ENCODE measurements at regions of chr17 and their contacts with region 1.

Region 1: GRCh38 chr17:43316522-43317142 is 82.2 kb upstream of the ARL4D start:
- DNase-seq: peak; percentile 39
- ATAC-seq: no peak
- H3K4me3 Mint-ChIP-seq: no peak overlapping the region
- H3K27ac Mint-ChIP-seq: no peak overlapping the region
- H3K4me1 Mint-ChIP-seq: peaks cover 19% of the 10 kb centered on the region
- H3K27me3 Mint-ChIP-seq: no peaks in the 10 kb centered on the region
- CTCF ChIP-seq: no peak

Region 2: GRCh38 chr17:42997984-42998938 is 318.4 kb before region 1 on chr17 and contains the start of gene RPL27:
- CTCF ChIA-PET with region 1: no interaction called
- POLR2A ChIA-PET with region 1: interaction called, 28 read pairs
- intact Hi-C with region 1: no loop called
- DNase-seq: peak; percentile 99
- ATAC-seq: peak; percentile 97
- H3K4me3 Mint-ChIP-seq: peak within 1 kb of the TSS; percentile 96
- H3K27ac Mint-ChIP-seq: peak within 1 kb of the TSS; percentile 99
- H3K4me1 Mint-ChIP-seq: peaks cover 25% of the 10 kb centered on the region
- H3K27me3 Mint-ChIP-seq: no peaks in the 10 kb centered on the region
- CTCF ChIP-seq: peak; percentile 85
- total RNA-seq, gene RPL27: 1,640 to 1,647 TPM

Region 3: DNA sequence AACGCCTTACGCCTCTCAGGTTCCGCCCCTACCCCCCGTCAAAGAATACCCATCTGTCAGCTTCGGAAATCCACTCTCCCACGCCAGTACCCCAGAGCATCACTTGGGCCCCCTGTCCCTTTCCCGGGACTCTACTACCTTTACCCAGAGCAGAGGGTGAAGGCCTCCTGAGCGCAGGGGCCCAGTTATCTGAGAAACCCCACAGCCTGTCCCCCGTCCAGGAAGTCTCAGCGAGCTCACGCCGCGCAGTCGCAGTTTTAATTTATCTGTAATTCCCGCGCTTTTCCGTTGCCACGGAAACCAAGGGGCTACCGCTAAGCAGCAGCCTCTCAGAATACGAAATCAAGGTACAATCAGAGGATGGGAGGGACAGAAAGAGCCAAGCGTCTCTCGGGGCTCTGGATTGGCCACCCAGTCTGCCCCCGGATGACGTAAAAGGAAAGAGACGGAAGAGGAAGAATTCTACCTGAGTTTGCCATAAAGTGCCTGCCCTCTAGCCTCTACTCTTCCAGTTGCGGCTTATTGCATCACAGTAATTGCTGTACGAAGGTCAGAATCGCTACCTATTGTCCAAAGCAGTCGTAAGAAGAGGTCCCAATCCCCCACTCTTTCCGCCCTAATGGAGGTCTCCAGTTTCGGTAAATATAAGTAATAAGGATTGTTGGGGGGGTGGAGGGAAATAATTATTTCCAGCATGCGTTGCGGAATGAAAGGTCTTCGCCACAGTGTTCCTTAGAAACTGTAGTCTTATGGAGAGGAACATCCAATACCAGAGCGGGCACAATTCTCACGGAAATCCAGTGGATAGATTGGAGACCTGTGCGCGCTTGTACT is 191.3 kb before region 1 on chr17 and contains the start of gene BRCA1:
- CTCF ChIA-PET with region 1: no interaction called
- POLR2A ChIA-PET with region 1: interaction called, 35 read pairs
- intact Hi-C with region 1: no loop called
- DNase-seq: peak; percentile 99
- ATAC-seq: peak; percentile 99
- H3K4me3 Mint-ChIP-seq: peak within 1 kb of the TSS; percentile 87
- H3K27ac Mint-ChIP-seq: peak within 1 kb of the TSS; percentile 98
- H3K4me1 Mint-ChIP-seq: peaks cover 16% of the 10 kb centered on the region
- H3K27me3 Mint-ChIP-seq: no peaks in the 10 kb centered on the region
- CTCF ChIP-seq: no peak
- total RNA-seq, gene BRCA1: 84.5 to 92.9 TPM

Region 4: GRCh38 chr17:43193251-43193650 is 123.4 kb before region 1 on chr17:
- CTCF ChIA-PET with region 1: no interaction called
- POLR2A ChIA-PET with region 1: interaction called, 23 read pairs
- intact Hi-C with region 1: no loop called
- DNase-seq: no peak
- ATAC-seq: no peak
- H3K4me3 Mint-ChIP-seq: no peak overlapping the region
- H3K27ac Mint-ChIP-seq: no peak overlapping the region
- H3K4me1 Mint-ChIP-seq: no peaks in the 10 kb centered on the region
- H3K27me3 Mint-ChIP-seq: no peaks in the 10 kb centered on the region
- CTCF ChIP-seq: no peak

Region 5: GRCh38 chr17:43224146-43224695 is 92.4 kb before region 1 on chr17:
- CTCF ChIA-PET with region 1: no interaction called
- POLR2A ChIA-PET with region 1: interaction called, 113 read pairs
- intact Hi-C with region 1: no loop called
- DNase-seq: no peak
- ATAC-seq: no peak
- H3K4me3 Mint-ChIP-seq: no peak overlapping the region
- H3K27ac Mint-ChIP-seq: no peak overlapping the region
- H3K4me1 Mint-ChIP-seq: peaks cover 4% of the 10 kb centered on the region
- H3K27me3 Mint-ChIP-seq: no peaks in the 10 kb centered on the region
- CTCF ChIP-seq: no peak

Region 6: GRCh38 chr17:43367737-43368242 is 51.2 kb after region 1 on chr17:
- CTCF ChIA-PET with region 1: no interaction called
- POLR2A ChIA-PET with region 1: interaction called, 103 read pairs
- intact Hi-C with region 1: no loop called
- DNase-seq: peak; percentile 68
- ATAC-seq: peak; percentile 64
- H3K4me3 Mint-ChIP-seq: peak overlapping the region; percentile 97
- H3K27ac Mint-ChIP-seq: peak overlapping the region; percentile 100
- H3K4me1 Mint-ChIP-seq: peaks cover 47% of the 10 kb centered on the region
- H3K27me3 Mint-ChIP-seq: no peaks in the 10 kb centered on the region
- CTCF ChIP-seq: no peak

Region 7: GRCh38 chr17:43418441-43419374 is 102.1 kb after region 1 on chr17:
- CTCF ChIA-PET with region 1: no interaction called
- POLR2A ChIA-PET with region 1: no interaction called
- intact Hi-C with region 1: no loop called
- DNase-seq: peak; percentile 23
- ATAC-seq: peak; percentile 58
- H3K4me3 Mint-ChIP-seq: no peak overlapping the region
- H3K27ac Mint-ChIP-seq: no peak overlapping the region
- H3K4me1 Mint-ChIP-seq: no peaks in the 10 kb centered on the region
- H3K27me3 Mint-ChIP-seq: peaks cover 5% of the 10 kb centered on the region
- CTCF ChIP-seq: no peak